ENCODE measurements at regions of chr10 and their contacts with region 1.

Region 1: GRCh38 chr10:124092860-124093773 is at the start of gene CHST15:
- DNase-seq: peak; percentile 82
- ATAC-seq: peak; percentile 39
- H3K4me3 ChIP-seq: peak within 1 kb of the TSS; percentile 58 to 85 (median 80)
- H3K4me3 Mint-ChIP-seq: peak within 1 kb of the TSS; percentile 98
- H3K27ac ChIP-seq: peak within 1 kb of the TSS; percentile 71 to 97
- H3K27ac Mint-ChIP-seq: peak within 1 kb of the TSS; percentile 90
- H3K4me1 ChIP-seq: peaks cover 29 to 33% of the 10 kb centered on the region in 2 donors
- H3K4me1 Mint-ChIP-seq: peaks cover 57% of the 10 kb centered on the region
- H3K27me3 ChIP-seq: no peaks in the 10 kb centered on the region
- H3K27me3 Mint-ChIP-seq: no peaks in the 10 kb centered on the region
- CTCF ChIP-seq: no peak
- total RNA-seq, gene CHST15: 72.0 and 75.4 TPM in 2 replicates

Region 2: DNA sequence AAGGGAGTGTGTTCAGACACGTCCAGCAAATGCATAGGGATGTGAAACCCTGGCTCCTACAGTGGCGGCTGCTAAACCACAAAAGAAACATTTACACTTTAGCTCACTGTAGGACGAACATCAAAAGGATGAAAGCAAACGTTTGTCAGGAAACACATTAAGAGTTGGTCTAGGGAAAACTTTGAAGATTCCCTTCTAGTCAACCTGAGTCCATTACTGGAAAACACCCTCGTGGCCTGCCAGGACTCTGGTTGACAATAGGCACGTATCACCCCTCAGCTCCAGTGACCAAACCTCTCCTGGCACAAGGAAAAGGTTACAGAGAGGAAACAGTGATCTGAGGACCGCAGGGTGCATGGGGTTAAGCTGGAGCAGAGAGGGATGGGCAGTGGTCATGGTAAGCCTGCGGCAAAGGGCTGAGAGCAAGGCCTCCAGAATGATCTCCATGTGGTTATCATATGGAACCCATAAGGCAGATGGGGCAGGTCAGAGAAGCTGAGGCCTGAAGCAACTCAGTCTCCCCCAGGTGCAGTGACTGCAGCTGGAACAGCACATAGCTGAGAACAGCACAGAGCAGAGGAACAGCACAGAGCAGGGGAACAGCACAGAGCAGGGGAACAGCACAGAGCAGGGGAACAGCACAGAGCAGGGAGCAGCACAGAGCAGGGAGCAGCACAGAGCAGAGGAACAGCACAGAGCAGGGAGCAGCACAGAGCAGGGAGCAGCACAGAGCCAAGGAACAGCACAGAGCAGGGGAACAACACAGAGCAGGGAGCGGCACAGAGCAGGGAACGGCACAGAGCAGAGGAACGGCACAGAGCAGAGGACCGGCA is 49.6 kb before region 1 on chr10:
- CTCF ChIA-PET with region 1: interaction called, 17 read pairs
- POLR2A ChIA-PET with region 1: interaction called, 12 read pairs
- intact Hi-C with region 1: no loop called
- DNase-seq: peak; percentile 77
- ATAC-seq: peak; percentile 89
- H3K4me3 ChIP-seq: peak overlapping the region in 1 of 5 experiments; percentile 0
- H3K4me3 Mint-ChIP-seq: peak overlapping the region; percentile 63
- H3K27ac ChIP-seq: peak overlapping the region in 1 of 2 donors; percentile 55
- H3K27ac Mint-ChIP-seq: peak overlapping the region; percentile 80
- H3K4me1 ChIP-seq: peaks cover 33 to 36% of the 10 kb centered on the region in 2 donors
- H3K4me1 Mint-ChIP-seq: peaks cover 51% of the 10 kb centered on the region
- H3K27me3 ChIP-seq: no peaks in the 10 kb centered on the region
- H3K27me3 Mint-ChIP-seq: no peaks in the 10 kb centered on the region
- CTCF ChIP-seq: no peak

Region 3: DNA sequence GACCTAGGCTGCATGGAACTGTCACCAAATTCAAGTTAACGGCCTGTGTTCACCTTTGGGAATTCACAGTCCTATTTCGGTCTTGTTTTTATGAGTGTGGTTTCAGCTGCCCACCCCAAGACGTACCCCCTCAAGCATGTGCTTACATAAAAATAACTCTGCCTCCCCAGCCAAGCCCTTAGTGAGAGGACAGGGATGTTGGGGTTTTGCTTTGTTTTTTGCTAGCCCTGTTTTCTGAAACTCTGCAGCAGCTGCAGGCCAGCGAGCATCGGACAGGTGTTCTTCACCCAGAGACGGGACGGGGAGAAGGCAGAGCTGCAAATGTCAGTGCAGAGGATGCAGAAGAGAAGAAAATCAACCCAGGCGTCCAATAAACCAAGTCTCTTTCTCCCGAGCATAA is 13.3 kb before region 1 on chr10:
- CTCF ChIA-PET with region 1: interaction called, 6 read pairs
- POLR2A ChIA-PET with region 1: interaction called, 19 read pairs
- intact Hi-C with region 1: no loop called
- DNase-seq: no peak
- ATAC-seq: peak; percentile 66
- H3K4me3 ChIP-seq: no peak overlapping the region
- H3K4me3 Mint-ChIP-seq: peak overlapping the region; percentile 60
- H3K27ac ChIP-seq: no peak overlapping the region
- H3K27ac Mint-ChIP-seq: peak overlapping the region; percentile 73
- H3K4me1 ChIP-seq: peaks cover 53 to 67% of the 10 kb centered on the region in 2 donors
- H3K4me1 Mint-ChIP-seq: peaks cover 73% of the 10 kb centered on the region
- H3K27me3 ChIP-seq: no peaks in the 10 kb centered on the region
- H3K27me3 Mint-ChIP-seq: no peaks in the 10 kb centered on the region
- CTCF ChIP-seq: no peak

Region 4: GRCh38 chr10:124125447-124126116 is 32.5 kb after region 1 on chr10:
- CTCF ChIA-PET with region 1: interaction called, 16 read pairs
- POLR2A ChIA-PET with region 1: interaction called, 27 read pairs
- intact Hi-C with region 1: loop called (anchors 1 kb)
- DNase-seq: peak; percentile 62
- ATAC-seq: no peak
- H3K4me3 ChIP-seq: no peak overlapping the region
- H3K4me3 Mint-ChIP-seq: no peak overlapping the region
- H3K27ac ChIP-seq: no peak overlapping the region
- H3K27ac Mint-ChIP-seq: no peak overlapping the region
- H3K4me1 ChIP-seq: peaks cover 32 to 61% of the 10 kb centered on the region in 2 donors
- H3K4me1 Mint-ChIP-seq: peaks cover 7% of the 10 kb centered on the region
- H3K27me3 ChIP-seq: no peaks in the 10 kb centered on the region
- H3K27me3 Mint-ChIP-seq: no peaks in the 10 kb centered on the region
- CTCF ChIP-seq: peak; percentile 70

Region 5: GRCh38 chr10:124152916-124153826 is 60.1 kb after region 1 on chr10:
- CTCF ChIA-PET with region 1: interaction called, 4 read pairs
- POLR2A ChIA-PET with region 1: interaction called, 10 read pairs
- intact Hi-C with region 1: no loop called
- DNase-seq: peak; percentile 56
- ATAC-seq: peak; percentile 59
- H3K4me3 ChIP-seq: peak overlapping the region in 2 of 5 experiments; percentile 25 to 34
- H3K4me3 Mint-ChIP-seq: no peak overlapping the region
- H3K27ac ChIP-seq: no peak overlapping the region
- H3K27ac Mint-ChIP-seq: no peak overlapping the region
- H3K4me1 ChIP-seq: peaks cover 30 to 34% of the 10 kb centered on the region in 2 donors
- H3K4me1 Mint-ChIP-seq: peaks cover 15% of the 10 kb centered on the region
- H3K27me3 ChIP-seq: no peaks in the 10 kb centered on the region
- H3K27me3 Mint-ChIP-seq: no peaks in the 10 kb centered on the region
- CTCF ChIP-seq: no peak

Region 6: GRCh38 chr10:124388823-124389612 is 295.9 kb after region 1 on chr10:
- CTCF ChIA-PET with region 1: interaction called, 8 read pairs
- POLR2A ChIA-PET with region 1: interaction called, 3 read pairs
- intact Hi-C with region 1: loop called (anchors 5 kb)
- DNase-seq: peak; percentile 94
- ATAC-seq: peak; percentile 99
- H3K4me3 ChIP-seq: peak overlapping the region in 4 of 5 experiments; percentile 38 to 75 (median 57)
- H3K4me3 Mint-ChIP-seq: peak overlapping the region; percentile 61
- H3K27ac ChIP-seq: no peak overlapping the region
- H3K27ac Mint-ChIP-seq: no peak overlapping the region
- H3K4me1 ChIP-seq: peaks cover 4 to 13% of the 10 kb centered on the region in 2 donors
- H3K4me1 Mint-ChIP-seq: peaks cover 5% of the 10 kb centered on the region
- H3K27me3 ChIP-seq: peaks cover 0 to 3% (median under 1%) of the 10 kb centered on the region in 4 experiments
- H3K27me3 Mint-ChIP-seq: peaks cover 6% of the 10 kb centered on the region
- CTCF ChIP-seq: peak; percentile 97